Activated CD4-positive, alpha-beta T cell treated with anti-CD3 and anti-CD28 coated beads, Interleukin-2, amount 10 ng/mL, durations not matched to agents 24 days and 14 days (primary cell): ENCODE measurements at regions of chr17 and their contacts with region 1.

Region 1: DNA sequence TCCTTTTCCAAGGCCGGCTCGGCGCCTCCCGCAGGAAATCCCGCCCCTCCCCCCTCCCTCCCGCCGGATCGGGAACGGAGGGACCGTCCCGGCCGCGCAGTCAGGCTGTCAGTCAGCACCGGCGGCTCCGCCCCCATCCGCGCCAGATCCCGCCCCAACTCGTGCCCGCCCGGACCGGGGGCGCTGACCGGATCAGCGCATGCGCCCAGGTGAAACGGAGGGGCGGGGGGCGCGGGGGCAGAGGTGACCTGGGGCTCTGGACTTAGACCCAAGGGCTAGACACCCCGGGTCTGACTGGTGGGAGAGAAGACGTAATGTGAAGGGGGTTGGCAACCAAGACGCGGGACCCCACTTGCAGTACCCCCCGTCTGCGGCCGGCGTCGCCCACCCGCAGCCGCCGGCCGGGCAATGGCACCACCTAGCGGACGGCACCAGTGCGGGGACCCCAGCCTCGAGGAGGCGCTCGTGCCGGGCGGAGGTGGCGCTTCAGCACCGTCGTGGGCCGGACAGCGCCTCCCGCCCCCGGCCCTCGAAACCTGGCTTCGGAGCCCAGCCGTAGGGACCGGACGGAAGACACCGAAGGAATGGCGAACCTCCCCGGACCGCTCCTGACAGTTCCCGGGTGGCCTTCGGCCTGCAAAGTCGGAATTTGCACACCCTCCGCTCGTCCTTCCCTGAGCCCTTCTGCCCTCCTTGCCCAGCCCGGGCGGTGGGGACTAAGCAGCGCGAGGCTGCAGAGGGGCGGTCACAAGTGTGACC is at the start of gene CASKIN2:
- DNase-seq: peak; percentile 93
- H3K4me3 Mint-ChIP-seq: peak within 1 kb of the TSS; percentile 82
- H3K27ac Mint-ChIP-seq: peak within 1 kb of the TSS; percentile 51
- H3K4me1 Mint-ChIP-seq: peaks cover 22% of the 10 kb centered on the region
- H3K27me3 Mint-ChIP-seq: peaks cover 7% of the 10 kb centered on the region
- total RNA-seq, gene CASKIN2: 1.4 and 1.6 TPM in 2 replicates

Region 2: DNA sequence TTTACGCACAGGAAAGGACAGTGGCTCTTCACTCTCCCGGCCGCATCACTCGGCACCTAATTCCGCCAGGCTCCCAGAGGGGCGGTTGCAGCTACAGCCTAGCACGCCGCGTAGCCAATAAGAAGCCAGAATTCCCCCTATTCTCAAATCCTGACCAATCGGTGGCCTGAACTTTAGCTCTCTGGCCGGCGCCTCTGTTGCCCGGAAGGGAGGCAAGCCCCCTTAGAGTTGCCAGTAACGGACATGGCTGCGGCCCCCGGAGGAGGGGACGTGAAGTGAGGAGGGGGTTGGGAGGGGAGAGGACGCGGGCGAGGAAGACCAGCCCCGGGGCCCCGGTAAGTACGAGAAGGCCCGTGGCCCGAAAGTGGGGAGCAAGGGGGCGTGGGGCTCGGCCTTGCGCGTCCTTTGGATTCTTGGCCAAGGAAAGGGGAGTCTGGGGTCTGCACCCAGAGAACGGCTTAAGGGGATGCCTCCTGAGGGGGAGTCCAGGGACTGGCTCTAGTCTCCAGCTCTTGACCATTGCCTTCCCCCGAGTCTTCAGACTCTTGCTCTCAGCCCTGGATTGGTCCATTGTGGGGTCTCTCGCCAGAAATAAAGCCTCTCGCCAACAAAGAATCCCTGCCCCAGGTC is 59.1 kb before region 1 on chr17 and contains the start of gene TMEM94:
- intact Hi-C with region 1: loop called (anchors 2 kb)
- DNase-seq: peak; percentile 97
- H3K4me3 Mint-ChIP-seq: peak within 1 kb of the TSS; percentile 93
- H3K27ac Mint-ChIP-seq: peak within 1 kb of the TSS; percentile 91
- H3K4me1 Mint-ChIP-seq: peaks cover 30% of the 10 kb centered on the region
- H3K27me3 Mint-ChIP-seq: no peaks in the 10 kb centered on the region
- total RNA-seq, gene TMEM94: 68.9 and 69.5 TPM in 2 replicates

Region 3: DNA sequence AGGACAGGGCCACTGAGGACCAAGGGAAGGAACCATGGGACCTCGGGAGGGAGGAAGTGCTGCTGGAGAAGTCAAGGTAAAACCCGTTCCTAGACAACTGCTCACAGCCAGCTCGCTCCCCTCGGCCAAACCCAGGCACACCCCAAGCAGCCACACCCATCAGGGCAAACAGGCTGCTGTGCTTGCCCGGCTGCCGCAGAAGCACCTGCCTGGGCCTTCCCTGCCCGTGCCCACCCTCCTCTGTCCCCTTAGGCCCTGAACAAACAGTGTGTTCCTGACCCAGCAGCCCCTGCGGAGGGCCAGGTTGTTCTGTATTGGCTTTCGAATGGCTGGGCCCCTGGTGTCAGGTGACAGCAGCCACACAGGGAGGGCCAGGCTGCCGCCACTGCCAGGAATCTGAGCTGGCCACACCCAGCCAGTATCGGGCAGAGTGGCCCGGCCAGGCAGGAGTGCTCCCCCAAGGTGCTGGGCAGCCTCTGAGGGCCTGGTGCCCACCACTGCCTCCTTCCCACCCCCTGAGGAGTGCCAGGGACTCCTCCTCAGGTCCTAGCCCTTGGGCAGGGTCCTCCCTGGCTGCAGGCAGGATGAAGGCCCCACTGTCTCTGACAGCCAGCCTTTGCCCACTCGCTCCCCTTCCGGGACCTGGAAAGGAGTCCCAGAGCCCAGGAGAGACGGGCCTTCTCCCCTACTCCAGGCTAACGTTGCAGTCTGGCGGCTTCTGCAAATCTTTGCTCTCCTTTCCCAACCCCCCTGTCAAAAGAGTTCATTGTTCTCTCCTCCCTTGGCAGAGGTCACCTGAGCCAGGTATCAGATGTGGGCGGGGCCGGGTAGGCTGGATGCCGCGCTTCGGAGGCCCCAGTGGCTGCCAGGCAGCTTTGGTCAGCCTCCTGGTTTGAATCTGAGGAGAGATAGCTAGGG is 33.8 kb after region 1 on chr17:
- intact Hi-C with region 1: no loop called
- DNase-seq: no peak
- H3K4me3 Mint-ChIP-seq: no peak overlapping the region
- H3K27ac Mint-ChIP-seq: no peak overlapping the region
- H3K4me1 Mint-ChIP-seq: no peaks in the 10 kb centered on the region
- H3K27me3 Mint-ChIP-seq: no peaks in the 10 kb centered on the region

Region 4: DNA sequence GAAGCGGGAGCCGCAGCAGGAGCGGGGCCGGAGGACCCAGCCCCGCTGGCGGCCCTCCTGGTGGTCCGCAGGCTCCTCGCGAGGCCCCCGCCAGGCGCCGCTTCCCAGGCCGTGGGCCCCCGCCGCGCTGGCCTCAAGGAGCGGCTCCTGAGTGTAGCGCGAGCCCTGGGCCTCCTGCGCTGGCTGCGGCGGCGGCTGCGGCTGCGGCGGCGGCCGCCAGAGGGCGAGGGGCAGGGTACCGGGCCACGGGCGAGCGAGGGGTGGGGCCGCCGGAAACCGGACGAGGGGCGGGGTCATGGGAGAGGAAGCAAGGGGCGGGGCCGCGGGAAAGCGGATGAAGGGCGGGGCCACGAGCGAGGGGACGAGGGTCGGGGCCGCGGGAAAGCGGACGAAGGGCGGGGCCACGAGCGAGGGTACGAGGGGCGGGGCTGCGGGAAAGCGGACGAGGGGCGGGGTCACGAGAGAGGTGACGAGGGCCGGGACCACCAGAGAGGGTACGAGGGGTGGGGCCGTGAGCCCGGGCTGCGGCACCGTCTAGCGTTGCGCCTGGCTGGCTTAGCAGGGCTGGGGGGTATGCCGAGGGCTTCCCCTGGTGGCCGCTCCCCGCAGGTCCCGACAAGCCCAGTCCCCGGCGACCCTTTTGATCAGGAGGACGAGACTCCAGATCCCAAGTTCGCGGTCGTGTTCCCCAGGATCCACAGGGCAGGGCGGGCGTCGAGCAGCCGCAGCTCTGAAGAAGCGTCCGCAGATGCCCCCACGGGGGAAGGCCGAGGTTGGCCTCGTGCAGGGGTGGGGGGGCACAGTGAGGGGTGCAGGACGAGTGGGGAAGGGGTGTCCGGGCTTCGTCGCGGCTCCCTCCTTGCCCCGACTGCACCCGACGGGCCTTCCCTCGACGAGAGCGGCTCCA is 73.6 kb after region 1 on chr17:
- intact Hi-C with region 1: loop called (anchors 2 kb)
- DNase-seq: peak; percentile 97
- H3K4me3 Mint-ChIP-seq: peak overlapping the region; percentile 80
- H3K27ac Mint-ChIP-seq: peak overlapping the region; percentile 66
- H3K4me1 Mint-ChIP-seq: peaks cover 2% of the 10 kb centered on the region
- H3K27me3 Mint-ChIP-seq: peaks cover 27% of the 10 kb centered on the region